ENCODE measurements at regions of chr13 and their contacts with region 1.

Region 1: DNA sequence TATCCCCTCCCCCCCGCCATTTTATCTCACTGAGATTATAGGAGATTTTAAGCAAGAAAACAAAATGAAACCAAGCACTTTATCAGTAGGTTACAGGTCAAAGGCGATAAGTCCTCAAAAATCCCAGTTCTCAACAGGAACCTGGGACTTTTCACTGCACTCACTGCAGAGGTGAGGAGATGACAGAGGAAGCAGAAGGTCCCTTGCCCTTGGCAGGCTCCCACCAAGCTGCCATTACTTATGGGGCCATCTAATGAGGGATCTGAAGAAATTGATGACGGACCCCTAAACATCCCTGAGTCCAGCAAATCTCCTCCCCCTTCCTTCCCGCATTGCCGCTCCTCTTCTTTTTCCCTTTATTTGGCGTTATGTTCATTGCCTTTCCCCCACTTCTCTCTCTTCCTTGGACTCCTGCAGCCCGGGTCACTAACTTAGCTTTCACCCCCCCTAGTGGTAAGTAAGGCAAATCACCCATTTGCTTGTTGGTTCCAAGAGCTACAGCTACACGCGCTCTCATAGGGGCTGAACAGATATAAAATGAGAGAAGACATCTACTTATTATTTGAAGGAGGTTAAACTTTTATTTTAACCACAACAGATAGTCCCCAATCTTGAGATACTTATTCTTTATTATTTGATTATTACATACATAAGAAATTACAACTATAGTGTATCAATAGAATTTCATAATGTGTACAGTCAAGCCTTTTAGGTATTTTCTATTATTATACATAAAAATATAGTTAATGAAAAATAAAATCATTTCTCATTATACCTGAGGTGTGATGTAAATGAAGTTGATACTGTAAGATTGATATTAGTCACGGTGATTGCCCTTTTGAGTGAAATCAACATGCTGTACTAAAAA is 52.0 kb upstream of the ARGLU1 start:
- DNase-seq: peak; percentile 35
- ATAC-seq: peak; percentile 86
- H3K4me3 Mint-ChIP-seq: no peak overlapping the region
- H3K27ac Mint-ChIP-seq: no peak overlapping the region
- H3K4me1 Mint-ChIP-seq: peaks cover 2% of the 10 kb centered on the region
- H3K27me3 Mint-ChIP-seq: peaks cover 13% of the 10 kb centered on the region
- CTCF ChIP-seq: peak; percentile 71

Region 2: DNA sequence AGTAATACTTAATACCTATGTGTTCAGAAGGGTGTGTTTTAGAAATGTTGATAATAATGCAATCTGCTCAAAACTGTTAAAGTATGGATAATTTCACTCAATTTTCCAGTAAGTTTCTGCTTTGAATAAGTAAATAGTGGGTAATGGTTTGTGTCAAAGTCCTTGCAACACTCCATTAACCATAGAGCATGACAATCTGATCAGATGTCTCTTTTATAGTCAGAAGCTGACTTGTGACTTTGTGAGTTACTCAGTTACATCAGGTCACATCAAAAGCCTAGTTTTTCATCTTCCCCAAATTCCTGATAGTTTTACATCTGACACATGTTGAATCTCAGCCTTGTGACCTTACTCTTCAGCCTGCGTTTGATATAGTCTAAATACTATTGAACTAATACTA is 422.4 kb before region 1 on chr13:
- CTCF ChIA-PET with region 1: no interaction called
- POLR2A ChIA-PET with region 1: no interaction called
- intact Hi-C with region 1: no loop called
- DNase-seq: no peak
- ATAC-seq: no peak
- H3K4me3 Mint-ChIP-seq: no peak overlapping the region
- H3K27ac Mint-ChIP-seq: no peak overlapping the region
- H3K4me1 Mint-ChIP-seq: no peaks in the 10 kb centered on the region
- H3K27me3 Mint-ChIP-seq: no peaks in the 10 kb centered on the region
- CTCF ChIP-seq: no peak

Region 3: DNA sequence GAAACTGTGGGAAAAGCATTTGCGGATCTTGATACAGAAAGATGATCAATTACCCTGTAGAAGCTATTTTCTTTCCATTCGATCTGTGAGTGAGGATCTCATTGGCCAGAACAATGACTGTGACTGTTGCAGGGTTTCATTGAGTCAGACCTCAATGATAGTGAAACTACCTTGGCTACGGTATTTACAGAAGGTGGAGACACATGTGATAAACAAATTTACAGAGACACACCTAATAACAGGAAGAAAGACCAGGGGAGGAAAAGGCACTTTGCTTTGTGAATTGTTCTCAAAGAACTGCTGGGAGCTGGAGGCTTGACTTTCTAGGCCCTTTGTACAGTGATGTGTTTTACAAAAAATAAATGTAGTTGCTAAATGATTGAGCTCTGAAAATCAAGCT is 32.1 kb before region 1 on chr13:
- CTCF ChIA-PET with region 1: no interaction called
- POLR2A ChIA-PET with region 1: no interaction called
- intact Hi-C with region 1: no loop called
- DNase-seq: no peak
- ATAC-seq: no peak
- H3K4me3 Mint-ChIP-seq: no peak overlapping the region
- H3K27ac Mint-ChIP-seq: no peak overlapping the region
- H3K4me1 Mint-ChIP-seq: no peaks in the 10 kb centered on the region
- H3K27me3 Mint-ChIP-seq: peaks cover 14% of the 10 kb centered on the region
- CTCF ChIP-seq: no peak

Region 4: GRCh38 chr13:106630650-106631049 is 10.7 kb after region 1 on chr13:
- CTCF ChIA-PET with region 1: interaction called, 18 read pairs
- POLR2A ChIA-PET with region 1: no interaction called
- intact Hi-C with region 1: no loop called
- DNase-seq: no peak
- ATAC-seq: no peak
- H3K4me3 Mint-ChIP-seq: no peak overlapping the region
- H3K27ac Mint-ChIP-seq: no peak overlapping the region
- H3K4me1 Mint-ChIP-seq: no peaks in the 10 kb centered on the region
- H3K27me3 Mint-ChIP-seq: peaks cover 7% of the 10 kb centered on the region
- CTCF ChIP-seq: no peak

Region 5: GRCh38 chr13:106660746-106661625 is 41.1 kb after region 1 on chr13:
- CTCF ChIA-PET with region 1: no interaction called
- POLR2A ChIA-PET with region 1: no interaction called
- intact Hi-C with region 1: no loop called
- DNase-seq: no peak
- ATAC-seq: no peak
- H3K4me3 Mint-ChIP-seq: no peak overlapping the region
- H3K27ac Mint-ChIP-seq: no peak overlapping the region
- H3K4me1 Mint-ChIP-seq: no peaks in the 10 kb centered on the region
- H3K27me3 Mint-ChIP-seq: peaks cover 3% of the 10 kb centered on the region
- CTCF ChIP-seq: no peak

Region 6: DNA sequence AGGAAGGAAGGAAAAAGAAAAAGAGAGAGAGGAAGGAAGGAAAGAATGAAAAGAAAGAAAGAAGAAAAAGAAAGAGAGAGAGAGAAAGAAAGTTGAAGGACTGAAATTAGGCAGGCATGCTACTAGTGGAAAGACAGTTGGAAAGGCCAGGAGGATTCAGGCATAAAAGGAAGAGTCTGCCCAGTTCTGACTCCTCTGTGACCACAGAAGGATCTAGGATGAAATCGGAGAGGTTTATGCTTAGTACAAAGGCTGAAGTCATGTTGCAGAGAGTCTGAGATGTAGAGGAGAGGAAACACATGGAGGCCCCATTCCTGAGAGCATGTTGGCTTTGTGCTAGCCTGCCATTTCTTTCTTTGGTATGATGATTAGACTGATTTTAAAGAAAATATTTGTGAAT is 194.5 kb after region 1 on chr13:
- CTCF ChIA-PET with region 1: no interaction called
- POLR2A ChIA-PET with region 1: no interaction called
- intact Hi-C with region 1: no loop called
- DNase-seq: no peak
- ATAC-seq: no peak
- H3K4me3 Mint-ChIP-seq: no peak overlapping the region
- H3K27ac Mint-ChIP-seq: no peak overlapping the region
- H3K4me1 Mint-ChIP-seq: no peaks in the 10 kb centered on the region
- H3K27me3 Mint-ChIP-seq: peaks cover 5% of the 10 kb centered on the region
- CTCF ChIP-seq: no peak